ENCODE measurements at regions of chr17 and their contacts with region 1.

Region 1: DNA sequence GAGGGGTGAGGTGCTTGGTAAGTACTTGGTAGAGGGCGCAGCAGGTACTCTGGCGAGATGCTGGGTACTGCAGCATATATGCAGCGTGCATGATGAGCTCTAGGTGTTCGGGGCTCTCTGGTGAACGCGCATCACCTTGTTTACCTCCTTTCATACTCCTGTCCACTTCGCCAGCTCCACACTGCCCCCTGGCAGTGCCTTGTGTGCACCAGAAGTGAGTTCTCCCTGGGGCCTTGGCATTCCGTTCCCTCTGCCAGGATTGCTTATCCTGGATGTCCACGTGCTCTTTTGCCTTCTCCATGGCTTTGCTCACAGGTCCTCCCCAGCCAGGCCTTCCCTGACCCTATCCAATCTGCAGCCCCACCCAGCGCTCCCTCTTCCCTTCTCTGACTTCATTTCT is 154.2 kb downstream of the MRM1 start:
- DNase-seq: peak; percentile 84
- H3K4me3 Mint-ChIP-seq: no peak overlapping the region
- H3K27ac Mint-ChIP-seq: no peak overlapping the region
- H3K4me1 Mint-ChIP-seq: no peaks in the 10 kb centered on the region
- H3K27me3 Mint-ChIP-seq: peaks cover 77% of the 10 kb centered on the region
- CTCF ChIP-seq: peak; percentile 93

Region 2: DNA sequence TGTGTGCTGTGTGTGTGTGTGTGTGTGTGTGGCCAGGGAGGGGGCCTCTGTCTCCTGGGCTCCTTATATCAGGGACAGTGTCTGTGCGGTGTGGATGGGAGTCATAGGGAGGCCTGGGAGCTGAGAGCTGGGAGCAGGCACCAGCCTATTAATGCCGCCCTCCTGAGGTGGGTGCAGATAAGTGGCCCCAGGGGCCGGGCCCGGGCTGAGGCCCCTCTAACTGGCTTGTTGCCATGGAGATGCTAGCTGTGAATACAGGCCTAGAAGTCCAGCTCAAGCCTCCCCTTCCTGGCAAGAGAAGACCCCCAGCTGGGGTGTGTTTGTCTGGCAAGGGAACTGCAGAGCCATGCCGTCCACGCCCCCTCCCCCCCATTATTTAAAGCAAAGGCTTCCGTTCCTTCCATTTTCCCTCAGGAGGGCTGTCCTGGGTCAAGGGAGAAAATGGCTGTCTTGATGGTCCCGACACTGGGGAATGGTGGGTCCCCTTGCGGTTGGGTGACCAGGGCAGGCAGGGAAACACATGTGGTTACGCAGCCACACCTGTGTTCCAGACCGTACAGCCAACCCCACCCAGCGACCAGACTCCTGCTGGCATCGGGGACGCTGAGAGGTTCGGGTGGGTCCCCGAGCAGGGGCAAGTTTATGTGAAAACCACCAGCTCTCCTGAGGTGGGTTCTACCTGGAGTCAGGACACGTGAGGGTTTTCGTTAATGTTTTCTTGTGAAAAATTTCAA is 13.2 kb before region 1 on chr17:
- CTCF ChIA-PET with region 1: interaction called, 21 read pairs
- intact Hi-C with region 1: no loop called
- DNase-seq: no peak
- H3K4me3 Mint-ChIP-seq: no peak overlapping the region
- H3K27ac Mint-ChIP-seq: no peak overlapping the region
- H3K4me1 Mint-ChIP-seq: no peaks in the 10 kb centered on the region
- H3K27me3 Mint-ChIP-seq: peaks cover 92% of the 10 kb centered on the region
- CTCF ChIP-seq: no peak

Measured in Calu3 (cell line).